ENCODE measurements at regions of chr15 and their contacts with region 1.

Region 1: DNA sequence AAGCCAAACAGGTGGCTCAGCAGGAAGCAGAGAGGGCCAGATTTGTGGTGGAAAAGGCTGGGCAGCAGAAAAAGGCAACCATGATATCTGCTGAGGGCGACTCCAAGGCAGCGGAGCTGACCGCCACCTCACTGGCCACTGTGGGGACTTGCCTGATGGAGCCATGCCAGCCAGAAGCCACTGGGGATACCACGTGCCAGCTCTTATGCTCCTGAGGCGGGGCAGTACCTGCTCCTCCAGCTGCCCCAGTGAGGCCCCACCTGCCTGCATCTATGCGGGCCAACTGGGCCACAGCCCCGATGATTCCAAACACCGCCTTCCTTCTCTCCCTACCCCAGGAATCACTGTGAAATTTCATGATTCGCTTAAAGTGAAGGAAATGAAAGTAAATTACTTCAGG is 22.9 kb upstream of the ARIH1 start:
- DNase-seq: no peak
- ATAC-seq: no peak
- H3K4me3 Mint-ChIP-seq: no peak overlapping the region
- H3K27ac Mint-ChIP-seq: no peak overlapping the region
- H3K4me1 Mint-ChIP-seq: no peaks in the 10 kb centered on the region
- H3K27me3 Mint-ChIP-seq: peaks cover under 1% of the 10 kb centered on the region

Region 2: DNA sequence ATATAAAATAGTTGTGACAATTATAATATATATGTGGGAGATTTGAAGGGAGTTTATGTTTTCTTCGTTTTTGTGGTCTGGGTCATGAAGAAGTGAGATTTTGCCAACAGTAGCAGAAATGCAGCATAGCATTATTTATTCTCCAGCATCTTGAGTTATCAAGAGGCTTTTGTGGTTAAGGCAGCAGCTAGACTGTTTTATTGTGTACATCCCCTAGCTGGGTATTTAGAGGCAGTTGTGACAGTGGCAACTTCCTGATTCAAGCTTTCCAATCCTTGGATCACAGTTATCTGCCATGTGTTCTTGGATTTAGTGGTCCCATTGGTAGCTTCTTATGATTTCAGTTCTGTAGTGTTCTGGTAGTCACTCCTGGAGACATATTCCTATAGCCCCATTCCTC is 51.9 kb after region 1 on chr15:
- CTCF ChIA-PET with region 1: no interaction called
- POLR2A ChIA-PET with region 1: no interaction called
- intact Hi-C with region 1: loop called in 1 of 2 experiments (anchors 10 kb)
- DNase-seq: no peak
- ATAC-seq: no peak
- H3K4me3 Mint-ChIP-seq: no peak overlapping the region
- H3K27ac Mint-ChIP-seq: no peak overlapping the region
- H3K4me1 Mint-ChIP-seq: peaks cover 51% of the 10 kb centered on the region
- H3K27me3 Mint-ChIP-seq: no peaks in the 10 kb centered on the region

Region 3: DNA sequence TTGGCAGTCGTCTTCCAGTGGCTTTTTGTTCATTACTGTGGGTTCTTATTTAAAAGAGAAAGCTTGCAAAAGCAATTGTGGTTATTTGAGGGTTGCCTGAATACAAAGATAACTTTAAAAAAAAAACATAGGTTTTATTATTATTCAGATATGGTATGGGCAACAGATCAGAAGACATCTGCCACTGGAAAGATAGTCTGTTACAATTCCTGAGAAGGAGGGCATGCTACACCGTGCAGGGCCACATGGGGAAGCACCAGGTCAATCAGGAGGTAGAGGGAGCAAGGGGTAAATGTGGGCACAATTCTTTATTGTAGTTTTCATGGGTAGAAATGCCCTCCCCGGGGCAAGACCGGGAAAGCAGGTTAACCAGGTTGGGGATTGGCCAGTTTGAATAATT is 281.3 kb after region 1 on chr15:
- CTCF ChIA-PET with region 1: no interaction called
- POLR2A ChIA-PET with region 1: no interaction called
- intact Hi-C with region 1: no loop called
- DNase-seq: no peak
- ATAC-seq: no peak
- H3K4me3 Mint-ChIP-seq: no peak overlapping the region
- H3K27ac Mint-ChIP-seq: no peak overlapping the region
- H3K4me1 Mint-ChIP-seq: no peaks in the 10 kb centered on the region
- H3K27me3 Mint-ChIP-seq: no peaks in the 10 kb centered on the region

Region 4: DNA sequence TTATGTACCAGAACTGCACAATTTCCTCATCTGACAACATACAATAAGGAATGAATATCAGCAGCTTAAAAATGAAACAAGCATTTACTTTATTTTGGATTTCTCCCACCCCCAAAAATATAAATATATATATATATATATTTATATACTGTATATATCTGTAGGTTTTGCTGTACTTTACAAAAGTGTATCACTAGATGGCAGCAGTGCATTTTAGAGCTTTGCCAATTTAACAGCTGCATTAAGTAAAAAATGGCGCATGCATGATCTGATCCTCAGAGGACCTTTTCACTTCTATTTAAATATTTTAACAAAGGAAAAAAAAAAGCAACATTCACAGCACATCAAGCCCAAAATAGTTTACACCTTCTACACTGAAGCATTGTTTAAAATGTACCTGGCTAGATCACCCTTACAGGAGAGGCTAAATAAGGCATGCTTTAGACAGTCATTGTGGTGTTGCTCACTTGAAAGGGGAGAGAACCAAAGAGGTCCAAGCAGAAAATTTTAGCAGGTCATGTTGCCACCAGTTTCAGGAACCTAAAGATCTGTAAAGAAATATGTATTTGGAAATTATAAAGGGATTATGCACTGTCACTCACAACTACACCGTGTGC is 1109.4 kb after region 1 on chr15:
- CTCF ChIA-PET with region 1: no interaction called
- POLR2A ChIA-PET with region 1: no interaction called
- intact Hi-C with region 1: no loop called
- DNase-seq: no peak
- ATAC-seq: peak; percentile 53
- H3K4me3 Mint-ChIP-seq: no peak overlapping the region
- H3K27ac Mint-ChIP-seq: no peak overlapping the region
- H3K4me1 Mint-ChIP-seq: no peaks in the 10 kb centered on the region
- H3K27me3 Mint-ChIP-seq: no peaks in the 10 kb centered on the region

Measured in activated CD4-positive, alpha-beta T cell treated with anti-CD3 and anti-CD28 coated beads for 36 hours (primary cell).